Ascending aorta (tissue), 2 donors: ENCODE measurements at regions of chr5 and their contacts with region 1.

Region 1: GRCh38 chr5:128844354-128844923 is 120.8 kb upstream of the SLC27A6 start:
- DNase-seq: no peak
- H3K4me3 ChIP-seq: no peak overlapping the region
- H3K27ac ChIP-seq: no peak overlapping the region
- H3K4me1 ChIP-seq: no peaks in the 10 kb centered on the region
- H3K27me3 ChIP-seq: no peaks in the 10 kb centered on the region
- CTCF ChIP-seq: peak in 2 of 3 experiments; percentile 29 to 52

Region 2: DNA sequence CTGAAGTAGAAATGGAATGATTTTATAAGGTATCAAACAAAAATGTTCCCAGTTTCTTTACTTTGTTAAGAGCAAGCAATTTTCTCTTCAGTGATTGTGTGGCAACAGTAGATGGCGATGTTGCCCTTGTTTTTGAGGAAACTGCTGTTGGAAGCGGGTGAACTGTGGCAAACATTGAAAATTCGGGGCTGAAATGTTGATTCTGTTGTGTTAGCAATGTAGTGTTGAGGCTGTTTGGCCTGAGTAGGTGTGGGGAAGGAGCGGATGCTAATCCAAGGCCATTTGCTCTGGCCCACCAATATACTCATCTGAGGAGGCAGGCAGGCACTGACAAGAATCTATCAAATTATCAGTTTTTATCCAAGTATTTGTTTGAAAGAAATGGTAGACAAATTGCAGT is 631.1 kb before region 1 on chr5:
- intact Hi-C with region 1: loop called (anchors 2 kb)
- DNase-seq: no peak
- H3K4me3 ChIP-seq: no peak overlapping the region
- H3K27ac ChIP-seq: no peak overlapping the region
- H3K4me1 ChIP-seq: no peaks in the 10 kb centered on the region
- H3K27me3 ChIP-seq: no peaks in the 10 kb centered on the region
- CTCF ChIP-seq: peak in 2 of 3 experiments; percentile 31 to 59

Region 3: DNA sequence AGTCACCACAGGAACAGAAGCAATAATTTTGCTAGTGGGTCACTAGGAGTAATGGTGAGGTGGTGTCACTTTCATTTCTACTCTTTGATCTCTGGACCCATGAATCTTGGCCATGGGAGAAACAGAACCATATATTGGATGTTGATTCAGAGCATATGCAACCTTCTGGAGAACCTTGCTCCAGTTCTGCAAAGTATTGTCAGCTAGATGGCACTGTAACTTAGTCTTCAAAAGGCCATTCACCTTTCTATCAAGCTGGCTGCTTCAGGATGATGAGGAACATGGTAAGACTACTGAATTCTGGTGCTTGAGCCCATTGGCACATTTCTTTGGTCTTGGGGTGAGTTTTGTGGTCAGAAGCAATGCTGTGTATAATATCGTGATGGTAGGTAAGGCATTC is 177.3 kb before region 1 on chr5:
- intact Hi-C with region 1: loop called (anchors 2 kb)
- DNase-seq: no peak
- H3K4me3 ChIP-seq: no peak overlapping the region
- H3K27ac ChIP-seq: no peak overlapping the region
- H3K4me1 ChIP-seq: no peaks in the 10 kb centered on the region
- H3K27me3 ChIP-seq: no peaks in the 10 kb centered on the region
- CTCF ChIP-seq: peak in 1 of 3 experiments; percentile 44